Heart right ventricle (tissue), 16 donors: ENCODE measurements at regions of chr4 and their contacts with region 1.

Region 1: DNA sequence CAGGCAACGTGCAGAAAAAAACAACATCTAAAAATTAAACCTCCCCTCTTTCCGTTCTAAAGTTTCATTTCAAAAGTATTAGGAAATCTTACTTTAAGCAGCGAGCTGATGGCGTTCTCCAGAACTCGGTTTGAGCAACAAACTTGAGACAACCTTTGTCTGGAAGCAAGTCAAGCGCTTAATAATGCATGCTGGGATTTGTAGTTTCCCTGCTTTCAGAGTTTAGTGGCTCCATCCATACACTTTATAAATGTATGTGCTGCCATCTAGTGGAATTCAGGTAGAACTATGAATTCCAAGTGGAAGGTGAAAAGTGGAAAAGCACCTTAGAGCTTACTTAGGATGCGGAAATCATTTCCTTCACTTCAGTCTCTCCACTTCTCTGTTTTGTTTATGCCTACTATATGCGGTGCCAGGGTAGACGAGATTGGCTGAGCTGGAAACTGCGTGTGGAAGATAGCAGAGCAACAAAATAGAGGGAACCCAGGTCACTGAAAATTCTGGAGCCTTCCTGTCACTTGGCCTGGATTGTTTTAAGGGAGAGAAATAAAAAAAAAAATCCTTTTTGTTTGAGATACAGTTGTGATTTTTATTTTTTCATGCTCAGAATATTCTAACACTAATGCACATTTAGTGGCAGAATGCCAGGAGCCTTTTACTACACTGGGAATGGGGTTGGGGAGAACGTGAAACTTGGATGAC is at the start of gene BDH2:
- DNase-seq: peak in 1 of 2 donors; percentile 79
- ATAC-seq: peak; percentile 90 to 98 (median 96)
- H3K4me3 ChIP-seq: peak within 1 kb of the TSS; percentile 19 to 72 (median 54)
- H3K27ac ChIP-seq: peak within 1 kb of the TSS in 9 of 10 donors; percentile 14 to 84 (median 68)
- H3K4me1 ChIP-seq: peaks cover 0 to 34% (median 16%) of the 10 kb centered on the region in 9 donors
- H3K27me3 ChIP-seq: no peaks in the 10 kb centered on the region
- CTCF ChIP-seq: peak; percentile 67 to 84 (median 77)
- total RNA-seq, gene BDH2: 20.2 to 27.2 (median 24.5) TPM

Region 2: GRCh38 chr4:102439236-102439614 is 660.6 kb before region 1 on chr4:
- intact Hi-C with region 1: loop called in 4 of 10 experiments (anchors 5 to 10 kb)
- DNase-seq: peak in 1 of 2 donors; percentile 46
- ATAC-seq: peak in 7 of 8 donors; percentile 75 to 88 (median 82)
- H3K4me3 ChIP-seq: no peak overlapping the region
- H3K27ac ChIP-seq: peak overlapping the region in 7 of 10 donors; percentile 16 to 73 (median 56)
- H3K4me1 ChIP-seq: peaks cover 0 to 19% (median 18%) of the 10 kb centered on the region in 9 donors
- H3K27me3 ChIP-seq: no peaks in the 10 kb centered on the region
- CTCF ChIP-seq: no peak

Region 3: GRCh38 chr4:102610007-102610406 is 489.8 kb before region 1 on chr4:
- intact Hi-C with region 1: loop called in 2 of 10 experiments (anchors 5 to 10 kb)
- DNase-seq: no peak
- ATAC-seq: no peak
- H3K4me3 ChIP-seq: no peak overlapping the region
- H3K27ac ChIP-seq: no peak overlapping the region
- H3K4me1 ChIP-seq: peaks cover 0 to 19% (median 1%) of the 10 kb centered on the region in 9 donors
- H3K27me3 ChIP-seq: no peaks in the 10 kb centered on the region
- CTCF ChIP-seq: peak in 4 of 9 donors; percentile 11 to 28 (median 21)

Region 4: GRCh38 chr4:102826890-102827673 is 272.8 kb before region 1 on chr4 and contains the start of gene UBE2D3:
- intact Hi-C with region 1: loop called in 1 of 10 experiments (anchors 5 kb)
- DNase-seq: peak; percentile 94 to 95
- ATAC-seq: peak; percentile 72 to 87 (median 75)
- H3K4me3 ChIP-seq: peak within 1 kb of the TSS; percentile 71 to 94 (median 88)
- H3K27ac ChIP-seq: peak within 1 kb of the TSS; percentile 97 to 100 (median 100)
- H3K4me1 ChIP-seq: peaks cover 2 to 54% (median 40%) of the 10 kb centered on the region in 9 donors
- H3K27me3 ChIP-seq: no peaks in the 10 kb centered on the region
- CTCF ChIP-seq: peak in 3 of 9 donors; percentile 17 to 38 (median 33)
- total RNA-seq, gene UBE2D3: 210 to 297 (median 250) TPM

Region 5: DNA sequence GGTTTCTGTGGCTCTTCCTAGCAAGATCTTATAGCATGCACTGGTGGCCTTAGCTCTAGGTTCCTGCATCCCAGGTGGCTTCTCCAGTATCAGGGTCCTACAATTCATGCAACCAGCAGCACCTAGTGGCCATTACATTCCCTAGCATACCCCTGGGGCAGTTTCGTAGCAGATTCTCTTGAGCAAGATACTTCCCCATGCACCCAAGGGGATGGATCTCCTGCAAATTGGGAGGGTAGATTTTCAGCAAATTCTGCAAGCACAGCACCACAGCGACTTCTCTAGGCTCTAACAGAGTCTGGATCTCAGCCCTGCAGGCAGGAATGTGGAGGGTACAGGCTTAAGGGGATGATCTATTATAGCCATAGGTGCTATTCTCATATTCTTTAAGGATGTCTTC is 67.3 kb before region 1 on chr4:
- intact Hi-C with region 1: loop called in 1 of 10 experiments (anchors 10 kb)
- DNase-seq: no peak
- ATAC-seq: peak in 1 of 8 donors; percentile 42
- H3K4me3 ChIP-seq: no peak overlapping the region
- H3K27ac ChIP-seq: no peak overlapping the region
- H3K4me1 ChIP-seq: no peaks in the 10 kb centered on the region
- H3K27me3 ChIP-seq: no peaks in the 10 kb centered on the region
- CTCF ChIP-seq: peak in 4 of 9 donors; percentile 12 to 28 (median 24)